AG04450 (cell line): ENCODE measurements at regions of chr4 and their contacts with region 1.

Region 1: GRCh38 chr4:8241895-8242696 is 27.5 kb upstream of the HTRA3 start:
- DNase-seq: peak; percentile 66
- H3K4me3 ChIP-seq: no peak overlapping the region
- H3K27ac ChIP-seq: no peak overlapping the region
- H3K27me3 ChIP-seq: peaks cover 4% of the 10 kb centered on the region
- CTCF ChIP-seq: peak; percentile 96

Region 2: GRCh38 chr4:8015512-8015911 is 226.6 kb before region 1 on chr4:
- CTCF ChIA-PET with region 1: no interaction called
- POLR2A ChIA-PET with region 1: no interaction called
- DNase-seq: no peak
- H3K4me3 ChIP-seq: peak overlapping the region; percentile 40
- H3K27ac ChIP-seq: no peak overlapping the region
- H3K27me3 ChIP-seq: peaks cover 50% of the 10 kb centered on the region
- CTCF ChIP-seq: peak; percentile 47

Region 3: GRCh38 chr4:8176547-8177399 is 65.3 kb before region 1 on chr4:
- CTCF ChIA-PET with region 1: interaction called, 29 read pairs
- POLR2A ChIA-PET with region 1: no interaction called
- DNase-seq: no peak
- H3K4me3 ChIP-seq: no peak overlapping the region
- H3K27ac ChIP-seq: no peak overlapping the region
- H3K27me3 ChIP-seq: peaks cover 29% of the 10 kb centered on the region
- CTCF ChIP-seq: peak; percentile 96

Region 4: GRCh38 chr4:8391972-8392371 is 149.9 kb after region 1 on chr4:
- CTCF ChIA-PET with region 1: interaction called, 11 read pairs
- POLR2A ChIA-PET with region 1: no interaction called
- DNase-seq: peak; percentile 72
- H3K4me3 ChIP-seq: no peak overlapping the region
- H3K27ac ChIP-seq: no peak overlapping the region
- H3K27me3 ChIP-seq: no peaks in the 10 kb centered on the region
- CTCF ChIP-seq: no peak

Region 5: DNA sequence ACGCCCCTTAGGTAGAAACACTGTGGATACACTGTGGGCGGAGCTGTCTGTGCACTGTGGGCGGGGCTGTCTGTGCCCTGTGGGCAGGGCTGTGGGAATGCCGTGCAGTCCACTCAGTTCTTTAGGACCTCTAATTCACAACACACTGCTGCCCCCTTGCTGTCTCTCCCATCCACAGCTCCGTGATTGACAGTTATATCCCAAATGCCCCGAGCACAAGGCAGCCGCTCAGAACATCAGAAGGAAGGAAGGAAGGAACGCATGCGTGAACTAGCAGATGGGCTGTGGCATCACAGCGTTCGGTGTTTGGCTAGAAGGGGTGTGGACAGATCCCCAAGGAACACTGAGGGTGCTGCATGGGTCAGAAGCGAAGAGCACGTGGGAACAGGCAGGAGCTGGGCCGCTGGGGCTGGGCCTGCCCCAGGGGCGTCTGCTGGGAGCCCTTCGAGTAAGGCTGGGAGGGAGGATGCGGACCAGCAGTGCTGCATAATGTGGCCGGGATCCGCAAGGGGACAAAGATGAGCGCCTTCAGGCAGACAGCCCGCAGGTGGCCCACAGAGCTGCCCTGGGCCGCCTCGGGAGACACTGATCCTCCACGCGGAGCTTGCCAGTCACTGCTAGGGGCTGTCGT is 168.7 kb after region 1 on chr4:
- CTCF ChIA-PET with region 1: interaction called, 28 read pairs
- POLR2A ChIA-PET with region 1: no interaction called
- DNase-seq: no peak
- H3K4me3 ChIP-seq: no peak overlapping the region
- H3K27ac ChIP-seq: no peak overlapping the region
- H3K27me3 ChIP-seq: no peaks in the 10 kb centered on the region
- CTCF ChIP-seq: peak; percentile 38

Region 6: GRCh38 chr4:8428293-8429097 is 186.4 kb after region 1 on chr4:
- CTCF ChIA-PET with region 1: interaction called, 10 read pairs
- POLR2A ChIA-PET with region 1: no interaction called
- DNase-seq: peak; percentile 67
- H3K4me3 ChIP-seq: peak overlapping the region; percentile 78
- H3K27ac ChIP-seq: peak overlapping the region; percentile 21
- H3K27me3 ChIP-seq: no peaks in the 10 kb centered on the region
- CTCF ChIP-seq: peak; percentile 59